AG04450 (cell line): ENCODE measurements at regions of chr20 and their contacts with region 1.

Region 1: GRCh38 chr20:47379433-47380150 is 23.1 kb upstream of the ZMYND8 start:
- DNase-seq: peak; percentile 63
- H3K4me3 ChIP-seq: no peak overlapping the region
- H3K27ac ChIP-seq: peak overlapping the region; percentile 52
- H3K27me3 ChIP-seq: no peaks in the 10 kb centered on the region
- CTCF ChIP-seq: no peak

Region 2: DNA sequence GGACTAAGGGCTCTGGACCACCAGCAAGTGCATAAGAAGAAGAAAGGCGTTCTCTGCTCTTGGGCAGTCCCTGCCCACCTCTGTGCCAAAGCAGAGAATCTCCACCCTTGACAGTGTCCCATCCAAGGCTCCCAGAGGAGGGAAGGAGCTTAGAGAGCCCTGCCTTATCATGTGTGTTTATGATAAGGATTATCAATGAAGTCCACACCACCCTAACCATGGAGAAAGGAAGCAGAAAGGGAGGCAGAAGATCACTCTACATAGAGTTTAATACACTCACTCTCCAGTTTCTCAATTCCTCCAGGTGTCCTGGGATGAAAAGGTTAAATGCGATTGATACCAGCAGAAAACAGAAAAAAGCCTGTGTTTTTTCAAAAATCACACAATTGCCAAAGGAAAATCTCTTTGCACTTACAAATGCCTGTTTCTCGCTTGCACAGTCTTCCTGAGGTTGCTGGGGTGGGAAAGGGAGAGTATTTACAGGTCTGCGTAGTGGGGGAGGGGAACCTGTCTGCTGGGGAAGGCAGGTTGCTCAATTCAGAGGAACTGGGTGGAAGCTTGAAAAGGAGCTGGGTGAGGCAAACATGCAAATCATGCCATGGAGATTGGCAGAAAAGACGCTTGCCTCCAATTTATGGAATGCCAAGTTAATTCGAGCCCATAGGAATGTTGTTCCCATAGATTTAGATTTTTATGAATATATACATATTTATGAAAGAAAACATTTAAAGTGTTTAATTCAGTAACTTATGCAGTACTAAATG is 380.9 kb before region 1 on chr20:
- CTCF ChIA-PET with region 1: no interaction called
- POLR2A ChIA-PET with region 1: no interaction called
- DNase-seq: no peak
- H3K4me3 ChIP-seq: no peak overlapping the region
- H3K27ac ChIP-seq: no peak overlapping the region
- H3K27me3 ChIP-seq: no peaks in the 10 kb centered on the region
- CTCF ChIP-seq: no peak

Region 3: GRCh38 chr20:47196091-47197081 is 183.2 kb before region 1 on chr20:
- CTCF ChIA-PET with region 1: interaction called, 103 read pairs
- POLR2A ChIA-PET with region 1: interaction called, 3 read pairs
- DNase-seq: no peak
- H3K4me3 ChIP-seq: no peak overlapping the region
- H3K27ac ChIP-seq: no peak overlapping the region
- H3K27me3 ChIP-seq: no peaks in the 10 kb centered on the region
- CTCF ChIP-seq: peak; percentile 94

Region 4: GRCh38 chr20:47231382-47232039 is 148.1 kb before region 1 on chr20:
- CTCF ChIA-PET with region 1: interaction called, 24 read pairs
- POLR2A ChIA-PET with region 1: no interaction called
- DNase-seq: peak; percentile 79
- H3K4me3 ChIP-seq: no peak overlapping the region
- H3K27ac ChIP-seq: peak overlapping the region; percentile 95
- H3K27me3 ChIP-seq: no peaks in the 10 kb centered on the region
- CTCF ChIP-seq: peak; percentile 56

Region 5: DNA sequence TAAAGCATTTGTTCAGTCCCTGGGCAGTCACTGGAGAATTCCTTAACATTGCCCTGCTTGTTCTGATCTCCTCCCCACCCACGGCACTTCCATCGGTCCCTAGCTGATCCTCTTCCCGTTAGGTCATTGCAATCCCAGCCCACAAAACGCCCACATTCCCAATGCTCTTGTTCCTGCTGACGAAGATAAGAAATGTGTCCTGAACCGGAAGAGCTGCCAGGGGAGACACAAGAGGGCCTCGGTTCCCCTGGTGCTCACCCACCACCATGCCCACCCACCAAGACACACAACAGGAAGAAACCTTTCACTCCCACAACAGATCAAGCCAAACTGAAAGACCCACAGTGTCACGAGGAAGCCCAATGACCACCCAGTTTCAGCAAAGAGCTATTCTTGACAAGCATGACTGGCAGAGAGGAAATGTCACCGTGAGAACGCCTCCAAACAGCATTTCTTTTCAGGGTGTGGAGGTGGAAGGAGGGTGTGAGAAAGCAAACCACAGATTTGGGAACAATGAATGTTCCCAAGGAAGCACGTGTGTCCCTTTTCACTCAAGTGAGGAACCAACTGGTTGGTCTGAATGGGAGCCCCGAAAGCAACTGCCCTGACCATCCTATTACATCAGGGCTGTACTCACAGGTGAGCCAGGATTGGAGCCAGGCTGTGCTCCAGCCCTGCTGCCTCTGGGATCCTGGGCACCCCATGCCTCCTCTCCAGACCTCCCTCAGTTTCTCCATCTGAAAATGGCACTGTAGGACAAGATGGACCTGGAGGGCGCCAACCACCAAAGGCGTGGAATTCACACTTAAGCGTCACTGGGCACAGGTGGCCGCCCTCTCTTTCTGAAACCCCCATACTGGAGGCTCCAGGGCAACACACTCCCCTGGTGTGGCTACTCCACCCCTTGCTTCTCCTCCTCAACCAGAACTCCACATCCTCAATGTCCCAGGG is 120.6 kb before region 1 on chr20:
- CTCF ChIA-PET with region 1: interaction called, 19 read pairs
- POLR2A ChIA-PET with region 1: interaction called, 3 read pairs
- DNase-seq: no peak
- H3K4me3 ChIP-seq: no peak overlapping the region
- H3K27ac ChIP-seq: peak overlapping the region; percentile 78
- H3K27me3 ChIP-seq: no peaks in the 10 kb centered on the region
- CTCF ChIP-seq: no peak

Region 6: DNA sequence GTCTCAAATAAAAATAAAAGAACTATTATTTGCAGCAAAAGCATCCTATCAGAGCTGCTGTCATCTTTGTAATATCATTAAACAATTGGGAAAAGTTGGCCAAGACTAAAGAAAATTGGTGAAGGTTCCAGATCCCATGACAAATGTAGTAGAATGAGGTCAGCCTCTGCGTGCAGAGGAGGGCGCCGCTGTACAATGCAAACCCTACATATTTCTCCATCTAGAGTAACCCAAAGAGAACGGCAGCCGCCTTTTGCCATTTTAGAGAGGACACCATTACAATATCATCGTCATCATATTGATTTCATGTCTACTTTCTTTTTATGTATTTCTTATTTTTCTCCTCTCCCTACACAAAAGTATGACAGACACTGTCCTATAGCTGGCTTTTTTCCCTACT is 82.6 kb before region 1 on chr20:
- CTCF ChIA-PET with region 1: interaction called, 15 read pairs
- POLR2A ChIA-PET with region 1: no interaction called
- DNase-seq: no peak
- H3K4me3 ChIP-seq: no peak overlapping the region
- H3K27ac ChIP-seq: no peak overlapping the region
- H3K27me3 ChIP-seq: no peaks in the 10 kb centered on the region
- CTCF ChIP-seq: no peak

Region 7: DNA sequence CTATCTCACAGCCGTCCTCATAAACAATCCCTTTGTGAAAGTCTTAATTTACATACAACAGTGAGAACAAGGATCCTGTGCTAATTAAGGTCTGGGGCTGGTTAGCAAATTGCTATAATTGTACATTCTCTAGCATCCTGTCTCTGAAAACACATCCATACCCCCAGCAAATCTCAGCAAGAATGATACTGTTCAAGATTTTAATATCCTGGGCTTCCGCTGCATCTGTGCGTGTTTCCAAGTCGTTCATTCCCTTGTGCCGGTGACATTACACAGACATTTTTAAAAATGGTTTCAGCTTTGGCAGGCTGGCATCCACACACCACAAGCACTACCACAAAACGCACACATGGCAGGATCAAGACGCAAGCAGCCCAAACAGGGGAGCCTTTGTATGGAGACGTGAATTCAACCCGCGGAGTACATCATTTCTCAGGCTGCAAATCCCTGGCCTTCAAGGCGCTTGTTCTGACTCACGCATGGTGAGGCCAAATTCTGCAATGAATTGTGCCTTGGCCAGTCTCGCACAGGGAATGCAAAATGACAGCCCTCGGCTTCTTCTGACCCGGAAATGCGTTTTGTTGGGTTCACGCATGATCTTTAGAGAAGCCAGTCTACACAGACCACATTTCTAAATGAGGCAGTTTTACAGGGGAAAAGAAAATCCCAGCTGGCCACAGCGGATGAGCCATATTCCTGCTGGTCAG is 43.3 kb before region 1 on chr20:
- CTCF ChIA-PET with region 1: interaction called, 11 read pairs
- POLR2A ChIA-PET with region 1: interaction called, 8 read pairs
- DNase-seq: no peak
- H3K4me3 ChIP-seq: peak overlapping the region; percentile 14; the same call in 1 of the 2 replicates
- H3K27ac ChIP-seq: peak overlapping the region; percentile 82
- H3K27me3 ChIP-seq: no peaks in the 10 kb centered on the region
- CTCF ChIP-seq: no peak

Region 8: DNA sequence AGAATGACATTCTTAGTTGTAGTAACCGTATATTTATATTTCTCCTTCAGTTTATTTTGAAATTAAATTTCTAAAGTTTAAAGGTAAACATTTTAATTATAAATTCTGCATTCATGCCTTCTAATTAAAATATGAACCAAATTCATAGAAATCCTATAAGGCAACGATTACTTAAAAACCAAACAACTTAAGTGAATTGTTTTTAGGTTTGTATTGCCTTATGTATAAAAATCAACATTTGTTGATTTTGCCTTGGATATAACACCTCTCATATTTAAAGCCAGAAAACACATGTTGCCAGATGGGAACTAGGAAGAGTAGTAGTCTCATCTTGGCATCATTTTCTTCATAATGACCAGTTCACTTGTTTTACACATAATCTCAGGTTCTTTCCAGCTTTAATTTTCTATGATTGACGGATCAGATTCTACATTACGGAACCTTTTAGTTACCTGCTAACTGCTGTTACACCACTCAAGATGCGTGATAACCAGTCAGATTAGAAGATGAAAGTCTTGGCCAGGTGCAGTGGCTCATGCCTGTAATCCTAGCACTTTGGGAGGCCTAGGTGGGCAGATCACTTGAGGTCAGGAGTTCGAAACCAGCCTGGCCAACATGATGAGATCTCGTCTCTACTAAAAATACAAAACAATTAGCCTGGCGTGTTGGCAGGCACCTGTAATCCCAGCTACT is 214.4 kb after region 1 on chr20:
- CTCF ChIA-PET with region 1: no interaction called
- POLR2A ChIA-PET with region 1: no interaction called
- DNase-seq: no peak
- H3K4me3 ChIP-seq: no peak overlapping the region
- H3K27ac ChIP-seq: no peak overlapping the region
- H3K27me3 ChIP-seq: no peaks in the 10 kb centered on the region
- CTCF ChIP-seq: no peak

Region 9: DNA sequence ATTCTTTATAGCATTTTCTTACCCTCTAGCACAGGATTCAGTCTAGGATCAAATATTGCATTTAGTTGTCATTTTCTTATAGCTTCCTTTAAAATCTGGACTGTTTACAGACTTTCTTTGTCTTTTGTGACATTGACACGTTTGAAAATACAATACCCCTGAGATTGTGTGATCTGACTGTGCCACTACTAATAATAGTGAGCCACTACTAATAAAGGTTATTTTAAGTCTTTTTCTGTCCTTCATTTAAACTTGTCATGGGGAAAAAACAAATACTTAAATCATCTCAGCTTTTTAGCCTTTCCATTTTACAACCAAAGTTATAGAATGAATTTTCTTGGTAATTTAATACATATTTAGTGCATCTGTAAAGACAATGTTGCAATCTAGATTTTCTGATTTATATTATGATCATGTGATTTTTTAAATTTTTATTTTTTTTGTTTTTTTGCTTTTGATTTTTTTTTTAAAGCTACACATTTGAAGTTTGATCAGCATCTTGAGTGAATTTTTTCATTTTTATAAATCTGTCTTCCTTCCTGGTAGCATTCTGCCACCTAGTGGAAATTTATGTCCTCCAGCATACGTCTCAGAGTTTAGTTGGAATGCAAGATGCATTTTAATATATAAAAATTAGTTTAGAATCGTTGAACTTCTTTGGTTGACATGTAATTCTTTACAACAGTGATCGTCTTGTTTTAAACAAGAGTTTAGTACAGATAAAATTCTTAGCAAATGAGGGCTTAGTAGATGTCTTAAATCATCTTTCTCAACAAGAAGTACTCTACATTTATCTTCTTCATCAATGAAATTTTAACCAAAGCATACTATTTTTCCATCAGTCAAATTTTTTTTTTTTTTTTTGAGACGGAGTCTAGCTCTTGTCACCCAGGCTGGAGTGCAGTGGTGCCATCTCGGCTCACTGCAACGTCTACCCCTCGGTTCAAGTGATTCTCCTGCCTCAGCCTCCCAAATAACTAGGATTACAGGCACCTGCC is 241.5 kb after region 1 on chr20:
- CTCF ChIA-PET with region 1: interaction called, 69 read pairs
- POLR2A ChIA-PET with region 1: no interaction called
- DNase-seq: peak; percentile 37
- H3K4me3 ChIP-seq: no peak overlapping the region
- H3K27ac ChIP-seq: no peak overlapping the region
- H3K27me3 ChIP-seq: no peaks in the 10 kb centered on the region
- CTCF ChIP-seq: peak; percentile 85